Activated T-helper 1 cell treated with anti-CD3 and anti-CD28 coated beads, Interleukin-12 subunit alpha, Interleukin-12 subunit beta, Interleukin-2, Interleukin-4 antibody, amounts not matched to agents 30 ng/mL and 10 ng/mL and 1 ng/mL, durations not matched to agents 14 hours and 24 hours and 36 hours (primary cell): ENCODE measurements at regions of chr9 and their contacts with region 1.

Region 1: DNA sequence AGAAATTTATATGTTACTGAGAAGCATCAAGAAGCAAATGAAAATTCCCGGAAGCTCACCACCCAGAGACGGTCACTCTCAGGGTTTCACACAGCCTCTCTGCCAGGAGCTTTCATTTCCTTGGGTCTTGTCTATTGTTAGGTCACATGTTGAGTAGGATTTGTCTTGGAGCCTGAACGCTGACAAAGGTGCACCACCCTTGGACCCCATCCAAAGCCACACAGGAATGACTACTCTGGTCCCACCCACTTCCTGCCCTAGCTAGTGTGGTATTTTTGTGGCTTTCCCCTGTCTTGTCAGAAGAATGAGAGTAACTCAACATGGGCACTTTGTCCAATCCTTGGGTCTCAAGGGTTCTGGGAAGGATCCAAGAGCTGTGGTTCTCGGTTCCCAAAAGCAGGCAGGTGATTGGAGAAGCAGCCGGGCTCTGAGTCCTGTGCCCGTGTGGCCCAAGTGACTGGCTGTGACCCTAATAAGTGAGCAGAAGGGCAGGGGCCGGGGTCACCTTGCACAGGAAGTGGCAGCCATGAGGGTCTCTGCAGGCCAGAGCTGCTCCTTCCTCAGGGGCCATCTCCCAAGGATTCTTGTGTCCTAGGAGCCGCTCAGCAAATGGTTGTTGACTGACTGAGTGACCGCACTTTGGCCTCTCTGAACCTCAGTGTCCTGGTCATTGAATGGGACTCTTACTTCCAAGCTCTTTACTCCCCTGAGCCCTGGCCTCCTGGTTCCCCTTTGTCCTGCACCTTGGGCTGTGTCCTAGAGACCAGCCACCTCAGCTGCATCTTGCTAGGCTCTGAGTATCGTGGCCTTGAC is 6.9 kb downstream of the FGD3 start:
- DNase-seq: peak; percentile 73
- H3K4me3 Mint-ChIP-seq: peak overlapping the region; percentile 49
- H3K27ac Mint-ChIP-seq: peak overlapping the region; percentile 88
- H3K4me1 Mint-ChIP-seq: peaks cover 56% of the 10 kb centered on the region
- H3K27me3 Mint-ChIP-seq: peaks cover 4% of the 10 kb centered on the region

Region 2: DNA sequence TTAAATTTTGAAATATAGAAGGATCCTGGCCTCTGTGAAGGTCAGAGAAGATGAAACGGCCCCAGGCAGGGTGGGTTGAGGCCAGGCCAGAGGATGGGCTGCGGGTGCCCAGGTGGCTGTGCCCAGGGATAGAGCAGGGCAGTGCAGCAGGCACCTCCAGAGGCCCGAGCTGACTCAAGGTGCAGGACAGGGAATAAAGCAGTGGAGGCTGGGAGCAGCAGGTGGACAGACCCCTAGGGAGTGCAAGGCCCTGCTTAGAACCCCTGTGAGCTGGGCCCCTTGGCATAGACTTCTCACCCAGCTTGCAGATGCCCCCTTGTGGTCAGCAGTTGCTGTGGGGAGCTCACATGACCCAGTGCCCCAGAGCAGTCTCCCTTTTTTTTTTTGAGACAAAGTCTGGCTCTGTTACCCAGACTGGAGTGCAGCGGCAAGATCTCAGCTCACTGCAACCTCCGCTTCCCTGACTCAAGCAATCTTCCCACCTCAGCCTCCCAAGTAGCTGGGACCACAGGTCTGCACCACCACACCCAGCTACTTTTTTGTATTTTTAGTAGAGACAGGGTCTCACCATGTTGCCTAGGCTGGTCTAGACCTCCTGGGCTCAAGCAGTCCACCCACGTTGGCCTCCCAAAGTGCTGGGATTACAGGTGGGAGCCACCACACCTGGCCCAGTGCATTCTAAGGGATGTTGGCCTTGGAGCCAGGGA is 348.4 kb after region 1 on chr9:
- intact Hi-C with region 1: loop called (anchors 5 kb)
- DNase-seq: peak; percentile 36
- H3K4me3 Mint-ChIP-seq: no peak overlapping the region
- H3K27ac Mint-ChIP-seq: no peak overlapping the region
- H3K4me1 Mint-ChIP-seq: peaks cover 9% of the 10 kb centered on the region
- H3K27me3 Mint-ChIP-seq: no peaks in the 10 kb centered on the region

Region 3: DNA sequence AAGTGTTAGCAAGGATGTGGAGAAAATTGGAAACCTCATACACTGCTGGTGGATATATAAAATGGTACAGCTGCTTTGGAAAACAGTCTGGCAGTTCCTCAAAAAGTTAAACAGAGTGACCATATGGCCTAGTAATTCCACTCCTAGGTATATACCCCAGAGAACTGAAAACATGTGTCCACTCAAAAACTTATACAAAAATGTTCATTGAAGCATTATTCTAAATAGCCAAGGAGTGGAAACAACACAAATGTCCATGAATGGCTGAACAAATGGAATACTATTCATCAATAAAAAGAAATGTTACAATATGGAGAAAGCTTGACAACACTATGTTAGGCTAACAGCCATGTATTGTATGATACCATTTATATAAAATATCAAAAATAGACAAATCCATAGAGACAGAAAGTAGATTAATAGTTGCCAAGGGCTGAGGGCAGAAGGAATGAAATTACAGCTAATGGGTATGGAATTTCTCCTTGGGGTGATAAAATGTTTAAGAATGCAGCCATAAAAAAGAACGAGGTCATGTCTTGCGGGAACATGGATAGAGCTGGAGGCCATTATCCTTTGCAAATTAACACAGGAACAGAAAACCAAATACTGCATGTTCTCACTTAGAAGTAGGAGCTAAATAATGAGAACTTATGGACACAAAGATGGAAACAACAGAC is 1718.7 kb after region 1 on chr9:
- intact Hi-C with region 1: loop called (anchors 5 kb)
- DNase-seq: no peak
- H3K4me3 Mint-ChIP-seq: no peak overlapping the region
- H3K27ac Mint-ChIP-seq: no peak overlapping the region
- H3K4me1 Mint-ChIP-seq: peaks cover 11% of the 10 kb centered on the region
- H3K27me3 Mint-ChIP-seq: peaks cover 12% of the 10 kb centered on the region